ENCODE measurements at regions of chr14 and their contacts with region 1.

Region 1: GRCh38 chr14:49852301-49853157 is at the start of gene NEMF:
- DNase-seq: peak; percentile 56 to 92 (median 79)
- ATAC-seq: peak; percentile 78
- H3K4me3 ChIP-seq: peak within 1 kb of the TSS; percentile 75 to 88
- H3K4me3 Mint-ChIP-seq: peak within 1 kb of the TSS; percentile 100
- H3K27ac ChIP-seq: peak within 1 kb of the TSS; percentile 68 to 82
- H3K27ac Mint-ChIP-seq: peak within 1 kb of the TSS; percentile 99
- H3K4me1 ChIP-seq: peaks cover 29% of the 10 kb centered on the region
- H3K4me1 Mint-ChIP-seq: peaks cover 42% of the 10 kb centered on the region
- H3K27me3 ChIP-seq: no peaks in the 10 kb centered on the region
- H3K27me3 Mint-ChIP-seq: no peaks in the 10 kb centered on the region
- CTCF ChIP-seq: peak; percentile 69
- total RNA-seq, gene NEMF: 101 to 106 TPM

Region 2: DNA sequence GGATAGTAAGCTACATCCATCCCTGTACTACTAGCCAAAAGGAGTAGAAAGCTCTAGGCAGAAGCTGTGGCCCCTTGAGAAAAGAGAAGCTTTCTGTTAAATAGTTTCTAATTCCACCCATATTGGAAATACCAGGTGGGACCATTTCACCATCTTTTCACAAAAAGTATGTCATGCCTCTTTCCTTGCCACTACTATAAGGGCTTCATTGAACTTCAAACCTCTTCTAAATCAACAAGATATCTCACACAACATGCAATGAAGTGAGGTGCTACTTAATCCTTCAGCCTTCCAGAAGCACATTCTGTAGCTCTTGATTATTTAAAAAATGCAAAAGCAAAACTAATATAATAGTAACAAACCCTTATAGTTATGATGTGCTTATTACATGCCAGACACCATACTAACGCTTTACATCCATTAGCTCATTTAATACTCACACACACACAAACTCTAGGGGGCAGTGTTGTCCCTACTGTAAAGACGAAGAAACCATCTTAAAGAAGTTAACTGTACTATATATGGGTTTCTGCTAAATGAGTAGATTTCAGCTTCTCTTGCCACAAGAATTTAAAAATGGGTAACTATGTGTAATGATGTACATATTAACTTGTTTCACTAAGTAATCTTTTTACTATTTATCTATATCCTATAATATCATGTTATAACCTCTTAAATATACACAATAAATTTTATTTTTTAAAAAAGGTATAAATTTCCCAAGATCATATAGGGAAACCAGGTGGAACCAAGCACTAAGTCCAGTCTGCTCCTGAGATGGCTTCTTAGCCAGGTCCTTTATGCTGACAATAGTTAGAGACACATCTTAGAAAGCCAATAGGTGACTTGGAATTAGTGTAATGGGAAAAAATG is 390.8 kb before region 1 on chr14:
- CTCF ChIA-PET with region 1: interaction called, 4 read pairs
- POLR2A ChIA-PET with region 1: no interaction called
- intact Hi-C with region 1: loop called in 1 of 2 experiments (anchors 5 kb)
- DNase-seq: peak in 8 of 9 experiments; percentile 39 to 85 (median 54)
- ATAC-seq: peak; percentile 87
- H3K4me3 ChIP-seq: no peak overlapping the region
- H3K4me3 Mint-ChIP-seq: no peak overlapping the region
- H3K27ac ChIP-seq: no peak overlapping the region
- H3K27ac Mint-ChIP-seq: no peak overlapping the region
- H3K4me1 ChIP-seq: no peaks in the 10 kb centered on the region
- H3K4me1 Mint-ChIP-seq: no peaks in the 10 kb centered on the region
- H3K27me3 ChIP-seq: no peaks in the 10 kb centered on the region
- H3K27me3 Mint-ChIP-seq: peaks cover 3% of the 10 kb centered on the region
- CTCF ChIP-seq: peak; percentile 78

Region 3: DNA sequence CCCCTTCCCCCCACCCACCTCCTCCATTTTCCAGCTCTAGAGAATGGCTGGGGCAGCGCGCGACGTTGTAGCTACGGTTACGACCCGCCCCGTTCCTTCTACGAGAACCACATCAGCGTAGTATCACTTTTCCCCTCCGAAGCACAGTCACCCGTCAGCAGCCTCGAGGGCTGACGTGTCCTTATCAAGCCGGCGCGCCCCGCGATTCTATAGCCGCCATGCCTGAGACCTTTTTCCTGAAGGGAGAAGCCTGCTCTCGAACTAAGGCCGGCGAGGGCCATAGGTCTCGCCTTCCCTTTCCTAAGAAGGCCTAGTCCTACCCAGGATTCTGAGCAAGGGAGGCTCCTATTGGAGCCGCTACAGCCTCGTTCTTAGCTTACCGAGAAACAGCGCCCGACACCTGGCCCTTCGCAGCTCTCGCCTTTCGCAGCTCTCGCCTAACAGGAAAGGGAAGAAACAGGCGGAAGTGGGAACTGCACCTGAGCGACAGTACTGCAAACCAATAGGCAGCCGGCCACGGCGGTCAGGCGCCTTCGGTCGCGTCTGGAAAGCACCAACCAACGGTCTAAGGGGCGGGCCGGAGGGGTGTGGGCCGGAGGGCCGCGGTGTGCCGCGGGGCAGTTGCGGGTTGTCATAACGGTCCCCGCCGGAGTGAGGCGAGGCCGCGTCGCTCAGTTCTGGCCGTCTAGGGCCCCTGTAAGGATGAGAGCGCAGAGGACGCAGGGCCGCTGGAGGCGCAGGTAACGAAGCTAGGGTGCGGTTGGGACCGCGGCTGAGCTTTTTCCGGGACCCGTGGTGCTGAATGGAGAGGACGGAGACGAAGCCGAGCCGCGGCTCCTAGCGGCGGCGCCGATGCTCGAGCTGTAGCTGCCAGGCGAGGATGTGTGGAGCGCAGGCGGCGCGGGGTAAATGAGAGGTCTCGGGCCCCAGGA is 232.1 kb before region 1 on chr14 and contains the starts of genes MGAT2 and RPL36AL:
- CTCF ChIA-PET with region 1: interaction called, 3 read pairs
- POLR2A ChIA-PET with region 1: interaction called, 15 read pairs
- intact Hi-C with region 1: no loop called
- DNase-seq: peak; percentile 85 to 97 (median 93)
- ATAC-seq: peak; percentile 79
- H3K4me3 ChIP-seq: peak within 1 kb of the TSS; percentile 94 to 95
- H3K4me3 Mint-ChIP-seq: peak within 1 kb of the TSS; percentile 97
- H3K27ac ChIP-seq: peak within 1 kb of the TSS; percentile 98 to 99
- H3K27ac Mint-ChIP-seq: peak within 1 kb of the TSS; percentile 100
- H3K4me1 ChIP-seq: peaks cover 40% of the 10 kb centered on the region
- H3K4me1 Mint-ChIP-seq: peaks cover 62% of the 10 kb centered on the region
- H3K27me3 ChIP-seq: no peaks in the 10 kb centered on the region
- H3K27me3 Mint-ChIP-seq: no peaks in the 10 kb centered on the region
- CTCF ChIP-seq: no peak
- total RNA-seq, gene MGAT2: 22.6 to 24.0 TPM
- total RNA-seq, gene RPL36AL: 302 to 318 TPM

Region 4: DNA sequence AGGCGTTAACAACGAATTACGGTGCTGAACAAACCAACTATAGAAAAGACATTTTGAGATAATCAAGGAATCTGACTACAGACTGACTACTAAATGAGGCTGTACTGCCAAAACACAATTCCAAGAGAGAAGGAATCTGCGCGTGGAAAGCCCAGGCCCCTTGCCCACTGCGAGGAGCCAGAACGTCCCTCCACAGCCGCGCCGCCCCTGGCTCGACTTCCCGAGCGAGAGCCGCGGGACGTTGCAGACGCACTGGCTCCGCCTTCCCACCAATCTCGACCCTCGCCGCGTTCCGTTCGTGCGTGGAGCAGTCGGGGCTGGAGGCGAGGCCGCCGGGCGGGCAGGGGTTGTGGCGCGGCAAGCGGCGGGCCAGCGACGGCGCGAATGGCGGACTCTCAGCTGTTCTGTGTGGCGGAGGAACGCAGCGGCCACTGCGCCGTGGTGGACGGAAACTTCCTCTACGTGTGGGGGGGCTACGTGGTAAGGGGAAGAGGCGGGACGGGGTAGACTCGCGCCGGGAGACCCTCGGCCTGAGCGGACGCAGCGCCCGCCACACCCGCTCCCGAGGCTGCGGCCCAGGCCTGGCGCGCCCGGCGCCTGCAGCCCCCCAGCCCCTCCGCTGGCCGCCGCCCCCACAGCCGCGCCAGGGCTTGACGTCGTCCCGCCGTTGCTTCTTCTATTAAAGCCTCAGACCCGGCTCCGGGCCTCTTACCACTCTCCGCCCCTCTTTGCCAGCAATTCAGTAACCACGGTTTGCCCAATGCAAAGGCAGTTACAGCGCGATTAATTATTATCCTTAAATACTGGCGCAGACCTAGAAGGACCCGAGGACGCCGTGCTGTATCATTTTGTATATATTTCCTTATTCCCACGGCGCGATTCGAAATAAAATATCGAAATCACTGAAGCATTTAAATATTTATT is 159.5 kb before region 1 on chr14 and contains the start of gene KLHDC1:
- CTCF ChIA-PET with region 1: no interaction called
- POLR2A ChIA-PET with region 1: no interaction called
- intact Hi-C with region 1: loop called in 1 of 2 experiments (anchors 5 kb)
- DNase-seq: peak; percentile 56 to 90 (median 81)
- ATAC-seq: peak; percentile 84
- H3K4me3 ChIP-seq: peak within 1 kb of the TSS; percentile 49 to 63
- H3K4me3 Mint-ChIP-seq: peak within 1 kb of the TSS; percentile 78
- H3K27ac ChIP-seq: peak within 1 kb of the TSS; percentile 59 to 82
- H3K27ac Mint-ChIP-seq: peak within 1 kb of the TSS; percentile 90
- H3K4me1 ChIP-seq: peaks cover 15% of the 10 kb centered on the region
- H3K4me1 Mint-ChIP-seq: peaks cover 34% of the 10 kb centered on the region
- H3K27me3 ChIP-seq: no peaks in the 10 kb centered on the region
- H3K27me3 Mint-ChIP-seq: no peaks in the 10 kb centered on the region
- CTCF ChIP-seq: no peak
- total RNA-seq, gene KLHDC1: 8.5 to 11.0 TPM

Region 5: GRCh38 chr14:49828640-49829039 is 23.9 kb before region 1 on chr14:
- CTCF ChIA-PET with region 1: interaction called, 12 read pairs
- POLR2A ChIA-PET with region 1: interaction called, 4 read pairs
- intact Hi-C with region 1: no loop called
- DNase-seq: no peak
- ATAC-seq: no peak
- H3K4me3 ChIP-seq: no peak overlapping the region
- H3K4me3 Mint-ChIP-seq: no peak overlapping the region
- H3K27ac ChIP-seq: no peak overlapping the region
- H3K27ac Mint-ChIP-seq: no peak overlapping the region
- H3K4me1 ChIP-seq: no peaks in the 10 kb centered on the region
- H3K4me1 Mint-ChIP-seq: peaks cover 5% of the 10 kb centered on the region
- H3K27me3 ChIP-seq: no peaks in the 10 kb centered on the region
- H3K27me3 Mint-ChIP-seq: no peaks in the 10 kb centered on the region
- CTCF ChIP-seq: no peak

Region 6: DNA sequence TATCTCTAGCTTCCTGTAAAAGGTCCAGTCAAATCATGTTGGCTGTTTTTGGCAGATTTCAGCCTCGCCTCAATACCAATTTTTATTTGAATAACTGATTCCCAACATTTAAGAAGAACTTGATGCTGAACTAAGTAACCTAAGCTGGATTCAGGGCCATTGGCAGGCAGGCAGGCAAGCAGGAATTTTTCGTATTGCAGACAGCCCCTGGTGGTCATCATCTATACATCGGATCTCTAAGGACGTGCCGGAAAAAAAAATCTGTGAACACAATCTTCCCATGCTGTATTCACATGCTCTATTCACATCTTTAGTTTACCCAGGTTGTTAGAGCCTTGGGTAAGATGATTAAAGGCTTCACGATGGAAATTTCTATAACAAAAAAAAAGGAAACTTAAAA is 256.8 kb after region 1 on chr14:
- CTCF ChIA-PET with region 1: interaction called, 14 read pairs
- POLR2A ChIA-PET with region 1: interaction called, 5 read pairs
- intact Hi-C with region 1: loop called (anchors 1 to 2 kb)
- DNase-seq: no peak
- ATAC-seq: no peak
- H3K4me3 ChIP-seq: no peak overlapping the region
- H3K4me3 Mint-ChIP-seq: no peak overlapping the region
- H3K27ac ChIP-seq: no peak overlapping the region
- H3K27ac Mint-ChIP-seq: no peak overlapping the region
- H3K4me1 ChIP-seq: peaks cover 1% of the 10 kb centered on the region
- H3K4me1 Mint-ChIP-seq: peaks cover 20% of the 10 kb centered on the region
- H3K27me3 ChIP-seq: no peaks in the 10 kb centered on the region
- H3K27me3 Mint-ChIP-seq: no peaks in the 10 kb centered on the region
- CTCF ChIP-seq: no peak

Region 7: GRCh38 chr14:50231475-50232275 is 379.1 kb after region 1 on chr14 and contains the start of gene SOS2:
- CTCF ChIA-PET with region 1: no interaction called
- POLR2A ChIA-PET with region 1: interaction called, 3 read pairs
- intact Hi-C with region 1: loop called in 1 of 2 experiments (anchors 2 kb)
- DNase-seq: peak; percentile 63 to 91 (median 83)
- ATAC-seq: peak; percentile 78
- H3K4me3 ChIP-seq: peak within 1 kb of the TSS; percentile 77 to 86
- H3K4me3 Mint-ChIP-seq: peak within 1 kb of the TSS; percentile 86
- H3K27ac ChIP-seq: peak within 1 kb of the TSS; percentile 81 to 84
- H3K27ac Mint-ChIP-seq: peak within 1 kb of the TSS; percentile 94
- H3K4me1 ChIP-seq: peaks cover 16% of the 10 kb centered on the region
- H3K4me1 Mint-ChIP-seq: peaks cover 36% of the 10 kb centered on the region
- H3K27me3 ChIP-seq: no peaks in the 10 kb centered on the region
- H3K27me3 Mint-ChIP-seq: no peaks in the 10 kb centered on the region
- CTCF ChIP-seq: no peak
- total RNA-seq, gene SOS2: 46.8 to 50.2 TPM

Measured in CD8-positive, alpha-beta T cell (primary cell).